ENCODE measurements at regions of chr9 and their contacts with region 1.

Region 1: GRCh38 chr9:107367727-107368502 is 84.8 kb downstream of the RAD23B start:
- DNase-seq: peak; percentile 33 to 59
- H3K4me3 ChIP-seq: no peak overlapping the region
- H3K4me3 Mint-ChIP-seq: peak overlapping the region; percentile 63
- H3K27ac Mint-ChIP-seq: peak overlapping the region; percentile 88
- H3K4me1 ChIP-seq: peaks cover 26% of the 10 kb centered on the region
- H3K4me1 Mint-ChIP-seq: peaks cover 24% of the 10 kb centered on the region
- H3K27me3 ChIP-seq: no peaks in the 10 kb centered on the region
- H3K27me3 Mint-ChIP-seq: no peaks in the 10 kb centered on the region
- CTCF ChIP-seq: no peak

Region 2: GRCh38 chr9:107389617-107390071 is 21.7 kb after region 1 on chr9:
- CTCF ChIA-PET with region 1: no interaction called
- POLR2A ChIA-PET with region 1: no interaction called
- intact Hi-C with region 1: loop called (anchors 2 kb)
- DNase-seq: peak; percentile 69 to 90
- H3K4me3 ChIP-seq: no peak overlapping the region
- H3K4me3 Mint-ChIP-seq: no peak overlapping the region
- H3K27ac Mint-ChIP-seq: peak overlapping the region; percentile 61
- H3K4me1 ChIP-seq: peaks cover 22% of the 10 kb centered on the region
- H3K4me1 Mint-ChIP-seq: peaks cover 12% of the 10 kb centered on the region
- H3K27me3 ChIP-seq: no peaks in the 10 kb centered on the region
- H3K27me3 Mint-ChIP-seq: no peaks in the 10 kb centered on the region
- CTCF ChIP-seq: no peak

Measured in Caco-2 (cell line).